ENCODE measurements at regions of chr13 and their contacts with region 1.

Region 1: DNA sequence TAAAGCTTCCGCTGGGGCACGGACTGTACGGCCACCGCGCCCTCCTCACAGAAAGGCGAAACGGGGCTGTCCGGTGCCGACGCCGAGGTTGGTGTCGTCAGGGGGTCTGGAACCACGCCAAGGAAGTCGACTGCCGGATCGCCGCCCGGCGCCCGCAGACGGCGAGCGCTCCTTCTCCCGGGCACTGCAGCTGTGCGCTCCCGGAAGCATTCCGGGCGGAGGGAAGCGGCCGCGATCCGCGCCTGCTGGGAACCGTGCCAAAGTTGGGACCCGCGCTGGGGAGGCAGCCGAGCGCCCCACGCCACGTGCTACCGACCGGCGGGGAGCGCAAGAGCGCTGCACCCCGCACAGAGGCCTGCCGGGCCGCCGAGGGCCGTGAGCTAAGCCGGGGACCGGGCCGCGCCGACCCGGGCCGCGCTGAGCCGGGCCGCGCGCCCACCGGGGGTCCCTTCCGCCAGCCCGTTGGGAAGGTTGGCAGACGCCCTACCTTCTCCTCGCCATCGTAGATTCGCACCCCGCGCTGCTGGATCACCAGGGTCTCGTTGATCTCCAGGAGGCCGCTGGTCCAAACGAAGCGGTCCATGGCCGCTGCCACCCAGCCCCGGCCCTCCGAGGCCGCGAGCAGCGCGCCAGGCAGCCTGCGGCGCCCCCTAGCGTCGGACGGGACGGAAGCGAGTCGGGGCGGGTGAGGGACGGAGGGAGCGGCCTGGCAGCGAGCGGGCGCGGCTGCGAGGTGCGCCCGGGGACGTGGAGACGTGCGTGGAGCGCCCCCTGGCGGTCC is at the start of gene VPS36:
- DNase-seq: peak; percentile 91
- CTCF ChIP-seq: peak; percentile 96

Region 2: GRCh38 chr13:52001120-52001731 is 449.0 kb before region 1 on chr13:
- CTCF ChIA-PET with region 1: interaction called, 14 read pairs
- POLR2A ChIA-PET with region 1: no interaction called
- DNase-seq: peak; percentile 76
- CTCF ChIP-seq: peak; percentile 47

Region 3: GRCh38 chr13:52344108-52344507 is 106.1 kb before region 1 on chr13:
- CTCF ChIA-PET with region 1: interaction called, 19 read pairs
- POLR2A ChIA-PET with region 1: no interaction called
- DNase-seq: no peak
- CTCF ChIP-seq: no peak

Region 4: DNA sequence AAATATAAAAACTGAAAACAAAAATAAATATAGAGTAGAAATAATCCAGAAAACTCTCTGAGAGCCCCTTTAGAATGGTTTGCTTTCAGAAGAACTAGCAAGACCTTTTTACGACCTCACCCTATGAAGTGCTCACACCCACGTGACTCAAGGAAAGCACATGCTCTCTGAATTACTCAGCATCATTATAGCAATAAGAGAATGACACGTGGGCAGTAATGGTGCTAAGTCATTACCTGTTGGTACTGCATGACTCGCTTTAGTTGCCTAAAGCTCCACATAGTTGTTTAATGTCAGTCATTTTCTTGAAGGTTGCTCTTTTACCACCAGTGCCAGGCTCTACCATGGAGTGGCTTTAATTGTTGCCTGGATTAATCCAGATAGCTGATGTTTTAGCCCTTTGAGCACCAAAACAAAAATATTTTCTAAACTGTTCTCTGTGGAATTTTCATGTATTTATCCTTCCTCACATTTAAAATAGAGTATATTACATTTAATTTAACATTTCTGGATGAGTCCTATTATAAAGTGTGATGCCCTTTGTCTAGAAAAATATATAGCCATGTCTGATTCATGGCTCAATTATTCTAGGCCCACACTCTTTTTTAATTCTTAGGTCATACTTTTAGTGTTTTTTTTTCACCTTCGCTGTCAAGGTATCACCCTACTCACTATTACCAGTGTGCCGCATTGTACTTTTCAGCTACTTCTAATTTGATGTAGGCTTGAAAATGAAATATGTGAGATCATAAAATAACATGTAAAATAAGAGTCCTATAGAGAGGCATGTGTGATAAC is 101.0 kb before region 1 on chr13:
- CTCF ChIA-PET with region 1: interaction called, 19 read pairs
- POLR2A ChIA-PET with region 1: no interaction called
- DNase-seq: no peak
- CTCF ChIP-seq: no peak

Region 5: GRCh38 chr13:52411629-52412028 is 38.6 kb before region 1 on chr13:
- CTCF ChIA-PET with region 1: interaction called, 13 read pairs
- POLR2A ChIA-PET with region 1: no interaction called
- DNase-seq: no peak
- CTCF ChIP-seq: no peak

Region 6: GRCh38 chr13:52421216-52421615 is 29.0 kb before region 1 on chr13:
- CTCF ChIA-PET with region 1: interaction called, 26 read pairs
- POLR2A ChIA-PET with region 1: no interaction called
- DNase-seq: no peak
- CTCF ChIP-seq: no peak

Region 7: DNA sequence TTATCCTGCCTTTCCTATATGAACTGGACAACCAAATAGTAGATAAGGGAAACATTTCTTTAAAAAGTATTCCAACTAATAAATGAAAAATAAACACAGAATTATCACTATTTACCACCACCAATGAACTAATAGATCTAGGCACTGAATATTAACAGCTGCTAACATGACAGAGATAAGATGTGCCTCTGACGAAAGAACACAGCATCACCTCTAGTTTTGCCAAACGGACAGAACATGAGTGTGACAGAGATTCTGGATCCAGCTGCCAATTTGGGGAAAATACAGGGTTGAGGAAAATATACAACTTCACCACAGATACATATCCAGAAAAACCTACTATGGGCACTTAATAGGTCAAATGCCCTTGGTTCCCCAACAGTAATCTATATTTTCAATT is 17.7 kb before region 1 on chr13:
- CTCF ChIA-PET with region 1: interaction called, 91 read pairs
- POLR2A ChIA-PET with region 1: no interaction called
- DNase-seq: no peak
- CTCF ChIP-seq: no peak

Region 8: GRCh38 chr13:52760077-52760476 is 309.9 kb after region 1 on chr13:
- CTCF ChIA-PET with region 1: no interaction called
- POLR2A ChIA-PET with region 1: no interaction called
- DNase-seq: no peak
- CTCF ChIP-seq: no peak

Region 9: DNA sequence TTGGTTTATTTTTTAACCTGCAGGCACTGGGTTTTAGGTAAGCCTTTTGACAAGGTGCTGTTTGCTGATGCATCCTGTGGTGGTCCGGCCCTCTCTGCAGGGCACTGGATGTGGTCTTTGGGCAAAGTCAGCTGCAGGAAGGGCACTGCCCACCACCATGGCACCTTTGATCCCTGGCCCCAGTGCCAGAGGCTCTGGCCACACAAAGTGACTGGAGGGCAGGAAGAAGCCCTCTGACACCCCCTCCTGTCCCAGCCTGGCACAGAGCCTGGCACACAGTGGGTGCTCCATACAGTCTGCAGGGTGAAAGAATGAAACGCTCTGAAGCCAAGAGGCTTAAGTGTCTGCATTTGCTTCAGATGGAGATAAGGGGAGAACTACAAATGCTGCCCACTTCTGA is 337.0 kb after region 1 on chr13:
- CTCF ChIA-PET with region 1: no interaction called
- POLR2A ChIA-PET with region 1: no interaction called
- DNase-seq: no peak
- CTCF ChIP-seq: no peak

Measured in GM10248 (cell line).